Activated B cell treated with CpG ODN at 0.5 μM for 24 hours (primary cell): ENCODE measurements at regions of chr18 and their contacts with region 1.

Region 1: DNA sequence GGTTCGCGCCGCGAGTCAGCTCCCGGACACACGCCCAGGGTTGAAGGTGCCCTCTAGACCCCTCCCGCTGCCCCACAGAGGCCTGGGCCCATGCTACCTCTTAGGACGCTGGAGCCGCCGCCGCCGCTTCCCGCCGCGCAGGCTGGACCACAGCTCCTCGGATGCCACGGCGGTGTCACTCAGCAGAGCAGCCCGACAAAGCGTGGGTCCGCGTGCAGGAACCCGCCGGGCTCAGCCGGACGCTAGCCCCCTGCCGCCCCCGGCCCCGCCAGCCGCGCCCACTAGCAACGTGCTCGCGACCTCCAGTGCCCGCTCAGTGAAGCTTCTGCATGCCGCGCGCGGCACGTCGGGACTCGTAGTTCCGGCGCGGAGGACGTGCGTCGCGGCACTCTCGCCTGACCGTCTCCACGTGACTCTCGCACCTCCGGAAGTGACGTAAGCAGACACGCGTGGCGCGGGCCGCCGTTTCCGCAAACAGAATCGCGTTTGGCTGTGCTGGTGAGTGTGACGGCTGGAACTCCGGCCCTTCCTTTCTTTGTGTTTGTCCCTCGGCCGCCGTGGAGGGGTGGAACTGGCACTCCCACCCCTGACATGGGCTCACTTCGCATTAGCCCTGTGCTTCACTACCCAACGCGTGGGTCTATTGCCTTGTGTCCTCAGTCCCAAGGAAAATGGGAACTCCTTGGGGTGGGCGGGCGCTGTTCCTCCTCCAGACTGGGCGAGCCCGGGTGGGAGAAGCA is at the starts of genes FAM210A and RNMT:
- DNase-seq: peak; percentile 86
- ATAC-seq: peak; percentile 93
- H3K4me3 Mint-ChIP-seq: peak within 1 kb of the TSS; percentile 96
- H3K27ac Mint-ChIP-seq: peak within 1 kb of the TSS; percentile 96
- H3K4me1 Mint-ChIP-seq: peaks cover 46% of the 10 kb centered on the region
- H3K27me3 Mint-ChIP-seq: no peaks in the 10 kb centered on the region
- CTCF ChIP-seq: no peak
- total RNA-seq, gene FAM210A: 12.6 and 13.9 TPM in 2 replicates
- total RNA-seq, gene RNMT: 45.5 and 48.5 TPM in 2 replicates

Region 2: GRCh38 chr18:12702221-12703095 is 1023.9 kb before region 1 on chr18 and contains the starts of genes CEP76 and PSMG2:
- CTCF ChIA-PET with region 1: no interaction called
- POLR2A ChIA-PET with region 1: no interaction called
- intact Hi-C with region 1: loop called (anchors 1 kb)
- DNase-seq: peak; percentile 90
- ATAC-seq: peak; percentile 88
- H3K4me3 Mint-ChIP-seq: peak within 1 kb of the TSS; percentile 99
- H3K27ac Mint-ChIP-seq: peak within 1 kb of the TSS; percentile 99
- H3K4me1 Mint-ChIP-seq: peaks cover 38% of the 10 kb centered on the region
- H3K27me3 Mint-ChIP-seq: no peaks in the 10 kb centered on the region
- CTCF ChIP-seq: no peak
- total RNA-seq, gene CEP76: 6.4 and 6.9 TPM in 2 replicates
- total RNA-seq, gene PSMG2: 67.4 and 69.1 TPM in 2 replicates

Region 3: DNA sequence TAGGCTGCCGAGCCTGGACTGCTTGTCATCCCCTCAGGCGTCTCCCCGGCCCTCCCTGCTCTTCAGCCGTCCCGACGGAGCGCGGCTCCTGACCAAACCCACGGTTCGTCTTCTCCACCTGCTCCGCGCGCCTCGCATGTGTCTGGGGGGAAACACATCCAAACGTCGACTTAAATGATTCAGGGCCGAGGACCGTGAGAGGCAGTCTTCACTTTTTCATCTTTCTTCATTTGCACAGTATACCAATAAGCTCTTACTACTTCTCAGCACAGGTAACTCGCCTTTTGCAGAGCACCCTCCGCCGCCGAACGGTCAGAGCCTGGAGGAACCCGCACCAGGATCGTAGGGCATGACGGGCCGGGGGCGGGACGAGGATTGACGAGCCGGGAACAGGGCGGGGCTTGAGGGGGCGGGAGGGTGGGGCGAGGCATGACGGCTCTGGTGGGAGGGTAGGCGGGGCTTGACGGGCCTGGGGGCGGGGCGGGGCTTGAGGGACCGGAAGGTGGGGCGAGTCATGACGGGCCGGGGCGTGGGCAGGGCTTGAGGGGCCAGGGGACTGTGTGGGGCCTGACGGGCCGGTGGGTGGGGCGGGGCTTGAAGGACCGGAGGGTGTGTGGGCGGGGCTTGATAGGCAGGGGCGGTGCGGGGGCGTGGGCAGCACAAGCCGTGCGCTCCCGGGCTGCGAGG is 778.9 kb before region 1 on chr18 and contains the start of gene SEH1L:
- CTCF ChIA-PET with region 1: no interaction called
- POLR2A ChIA-PET with region 1: interaction called, 3 read pairs
- intact Hi-C with region 1: loop called (anchors 1 kb)
- DNase-seq: peak; percentile 96
- ATAC-seq: peak; percentile 90
- H3K4me3 Mint-ChIP-seq: peak within 1 kb of the TSS; percentile 96
- H3K27ac Mint-ChIP-seq: peak within 1 kb of the TSS; percentile 97
- H3K4me1 Mint-ChIP-seq: peaks cover 24% of the 10 kb centered on the region
- H3K27me3 Mint-ChIP-seq: no peaks in the 10 kb centered on the region
- CTCF ChIP-seq: no peak
- total RNA-seq, gene SEH1L: 67.0 and 79.3 TPM in 2 replicates

Region 4: GRCh38 chr18:13137670-13138419 is 588.6 kb before region 1 on chr18:
- CTCF ChIA-PET with region 1: no interaction called
- POLR2A ChIA-PET with region 1: interaction called, 6 read pairs
- intact Hi-C with region 1: loop called (anchors 1 kb)
- DNase-seq: peak; percentile 43
- ATAC-seq: peak; percentile 87
- H3K4me3 Mint-ChIP-seq: peak overlapping the region; percentile 98
- H3K27ac Mint-ChIP-seq: peak overlapping the region; percentile 97
- H3K4me1 Mint-ChIP-seq: peaks cover 23% of the 10 kb centered on the region
- H3K27me3 Mint-ChIP-seq: no peaks in the 10 kb centered on the region
- CTCF ChIP-seq: no peak

Region 5: GRCh38 chr18:13464432-13465123 is 261.8 kb before region 1 on chr18:
- CTCF ChIA-PET with region 1: no interaction called
- POLR2A ChIA-PET with region 1: interaction called, 4 read pairs
- intact Hi-C with region 1: loop called (anchors 5 kb)
- DNase-seq: peak; percentile 54
- ATAC-seq: peak; percentile 91
- H3K4me3 Mint-ChIP-seq: peak overlapping the region; percentile 91
- H3K27ac Mint-ChIP-seq: peak overlapping the region; percentile 91
- H3K4me1 Mint-ChIP-seq: peaks cover 30% of the 10 kb centered on the region
- H3K27me3 Mint-ChIP-seq: no peaks in the 10 kb centered on the region
- CTCF ChIP-seq: no peak

Region 6: DNA sequence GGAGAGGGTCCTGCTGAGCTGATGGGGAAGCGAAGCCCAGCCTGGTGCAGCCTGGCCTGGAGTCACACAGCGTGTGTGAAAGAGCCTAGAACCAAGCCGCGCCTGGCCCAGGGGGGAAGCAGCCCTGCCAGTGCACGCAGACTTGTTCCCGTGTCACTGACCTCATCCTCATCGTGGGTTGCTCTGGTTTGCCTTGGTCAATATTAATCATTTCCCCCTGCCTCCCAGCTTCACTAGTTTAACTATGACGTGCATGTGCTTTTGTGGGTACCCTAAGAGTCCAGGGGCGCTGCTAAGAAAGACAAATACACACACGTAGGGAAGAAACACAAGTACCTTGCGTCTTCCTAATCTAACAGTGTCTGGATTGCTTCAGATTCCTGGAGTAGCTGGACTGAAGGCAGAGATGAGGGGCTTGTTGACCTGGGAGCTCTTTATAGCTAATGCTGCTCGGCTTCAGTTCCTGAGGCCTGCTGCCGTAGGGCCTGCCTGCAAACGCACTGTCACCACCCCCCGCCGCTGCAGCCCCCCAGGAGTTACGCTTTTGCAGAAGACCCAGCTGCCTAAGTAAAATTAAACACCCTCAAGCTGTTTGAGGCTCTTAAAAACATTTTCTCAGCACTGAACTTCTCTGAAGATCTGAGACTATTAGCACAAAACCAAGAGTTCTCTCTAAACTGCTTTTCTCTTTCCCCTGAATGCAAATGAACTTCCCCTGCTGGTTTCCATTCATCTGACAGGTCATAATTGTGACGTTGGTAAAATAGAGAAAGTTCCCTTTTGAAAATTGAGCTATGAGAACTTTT is 159.3 kb before region 1 on chr18:
- CTCF ChIA-PET with region 1: interaction called, 4 read pairs
- POLR2A ChIA-PET with region 1: interaction called, 18 read pairs
- intact Hi-C with region 1: no loop called
- DNase-seq: peak; percentile 62
- ATAC-seq: peak; percentile 53
- H3K4me3 Mint-ChIP-seq: peak overlapping the region; percentile 81
- H3K27ac Mint-ChIP-seq: peak overlapping the region; percentile 99
- H3K4me1 Mint-ChIP-seq: peaks cover 83% of the 10 kb centered on the region
- H3K27me3 Mint-ChIP-seq: no peaks in the 10 kb centered on the region
- CTCF ChIP-seq: no peak

Region 7: GRCh38 chr18:13680612-13681011 is 45.8 kb before region 1 on chr18:
- CTCF ChIA-PET with region 1: no interaction called
- POLR2A ChIA-PET with region 1: no interaction called
- intact Hi-C with region 1: no loop called
- DNase-seq: no peak
- ATAC-seq: no peak
- H3K4me3 Mint-ChIP-seq: no peak overlapping the region
- H3K27ac Mint-ChIP-seq: no peak overlapping the region
- H3K4me1 Mint-ChIP-seq: peaks cover 18% of the 10 kb centered on the region
- H3K27me3 Mint-ChIP-seq: no peaks in the 10 kb centered on the region
- CTCF ChIP-seq: no peak

Region 8: GRCh38 chr18:13746633-13747032 is 20.2 kb after region 1 on chr18:
- CTCF ChIA-PET with region 1: no interaction called
- POLR2A ChIA-PET with region 1: no interaction called
- intact Hi-C with region 1: no loop called
- DNase-seq: no peak
- ATAC-seq: no peak
- H3K4me3 Mint-ChIP-seq: no peak overlapping the region
- H3K27ac Mint-ChIP-seq: no peak overlapping the region
- H3K4me1 Mint-ChIP-seq: no peaks in the 10 kb centered on the region
- H3K27me3 Mint-ChIP-seq: no peaks in the 10 kb centered on the region
- CTCF ChIP-seq: no peak